Activated CD4-positive, alpha-beta T cell treated with anti-CD3 and anti-CD28 coated beads for 36 hours (primary cell): ENCODE measurements at regions of chr7 and their contacts with region 1.

Region 1: DNA sequence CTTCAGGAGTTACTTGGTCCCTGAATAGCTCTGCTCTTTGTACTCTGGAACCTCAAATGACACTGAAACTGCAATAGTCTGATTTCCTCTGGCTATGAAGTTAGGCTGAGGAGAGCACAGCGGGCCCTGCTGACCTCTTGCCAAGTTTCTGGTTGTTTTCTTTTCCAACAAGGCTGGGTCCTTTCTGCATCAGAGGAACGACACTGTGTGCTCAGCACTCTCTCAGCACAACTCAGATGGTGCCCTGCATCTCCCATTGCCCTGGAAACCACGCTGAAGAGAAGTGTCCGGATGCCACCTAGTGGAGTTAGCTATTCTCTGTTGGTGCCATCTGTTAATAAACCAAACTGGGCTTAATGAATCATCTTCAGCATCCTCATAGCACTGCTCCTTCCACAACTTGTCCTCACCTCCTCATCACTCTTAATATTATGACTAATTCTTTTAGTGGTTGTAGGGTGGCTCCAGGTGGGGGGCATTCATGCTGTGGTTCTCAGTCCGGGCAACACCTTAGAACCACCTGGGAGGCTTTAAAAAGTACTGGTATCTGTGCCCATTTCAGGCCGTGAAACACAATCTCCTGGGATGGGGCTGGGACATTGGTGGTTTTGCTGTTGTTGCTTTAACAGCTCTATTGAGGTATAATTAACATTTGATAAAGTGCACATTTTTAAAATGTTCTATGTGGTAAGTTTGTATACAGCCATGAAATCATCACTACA is 8.2 kb upstream of the EFCAB10 start:
- DNase-seq: peak; percentile 77
- ATAC-seq: peak; percentile 98
- H3K4me3 Mint-ChIP-seq: no peak overlapping the region
- H3K27ac Mint-ChIP-seq: no peak overlapping the region
- H3K4me1 Mint-ChIP-seq: peaks cover 8% of the 10 kb centered on the region
- H3K27me3 Mint-ChIP-seq: no peaks in the 10 kb centered on the region

Region 2: GRCh38 chr7:104192434-104192833 is 1397.1 kb before region 1 on chr7:
- CTCF ChIA-PET with region 1: no interaction called
- POLR2A ChIA-PET with region 1: interaction called, 10 read pairs
- intact Hi-C with region 1: no loop called
- DNase-seq: no peak
- ATAC-seq: no peak
- H3K4me3 Mint-ChIP-seq: no peak overlapping the region
- H3K27ac Mint-ChIP-seq: no peak overlapping the region
- H3K4me1 Mint-ChIP-seq: peaks cover 11% of the 10 kb centered on the region
- H3K27me3 Mint-ChIP-seq: no peaks in the 10 kb centered on the region

Region 3: GRCh38 chr7:105131033-105131656 is 458.4 kb before region 1 on chr7:
- CTCF ChIA-PET with region 1: no interaction called
- POLR2A ChIA-PET with region 1: no interaction called
- intact Hi-C with region 1: loop called in 1 of 2 experiments (anchors 10 kb)
- DNase-seq: no peak
- ATAC-seq: peak; percentile 66
- H3K4me3 Mint-ChIP-seq: no peak overlapping the region
- H3K27ac Mint-ChIP-seq: peak overlapping the region; percentile 47
- H3K4me1 Mint-ChIP-seq: peaks cover 37% of the 10 kb centered on the region
- H3K27me3 Mint-ChIP-seq: no peaks in the 10 kb centered on the region

Region 4: DNA sequence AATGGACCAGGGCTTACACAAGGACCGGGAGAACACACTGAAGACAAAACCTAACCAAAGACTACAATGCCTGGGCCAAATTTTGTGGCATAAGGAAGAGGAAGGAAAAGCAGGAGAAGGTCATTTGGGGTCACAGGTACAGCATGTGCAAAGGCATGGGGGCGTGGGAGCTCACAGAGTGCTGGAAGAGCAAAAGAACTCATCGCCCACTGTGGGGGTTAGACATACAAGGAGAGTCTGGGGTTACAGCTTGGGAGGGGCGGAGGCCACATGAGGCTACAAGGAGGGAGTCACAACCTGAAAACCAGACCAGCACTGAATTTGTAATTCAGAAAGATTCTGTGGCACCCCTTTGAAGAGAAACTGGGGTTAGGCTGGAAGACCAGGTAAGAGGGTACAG is 77.1 kb before region 1 on chr7:
- CTCF ChIA-PET with region 1: interaction called, 3 read pairs
- POLR2A ChIA-PET with region 1: no interaction called
- intact Hi-C with region 1: loop called in 1 of 2 experiments (anchors 5 kb)
- DNase-seq: peak; percentile 24
- ATAC-seq: peak; percentile 52
- H3K4me3 Mint-ChIP-seq: peak overlapping the region; percentile 1
- H3K27ac Mint-ChIP-seq: peak overlapping the region; percentile 66
- H3K4me1 Mint-ChIP-seq: peaks cover 31% of the 10 kb centered on the region
- H3K27me3 Mint-ChIP-seq: no peaks in the 10 kb centered on the region